IMR-90 (cell line): ENCODE measurements at regions of chr15 and their contacts with region 1.

Region 1: DNA sequence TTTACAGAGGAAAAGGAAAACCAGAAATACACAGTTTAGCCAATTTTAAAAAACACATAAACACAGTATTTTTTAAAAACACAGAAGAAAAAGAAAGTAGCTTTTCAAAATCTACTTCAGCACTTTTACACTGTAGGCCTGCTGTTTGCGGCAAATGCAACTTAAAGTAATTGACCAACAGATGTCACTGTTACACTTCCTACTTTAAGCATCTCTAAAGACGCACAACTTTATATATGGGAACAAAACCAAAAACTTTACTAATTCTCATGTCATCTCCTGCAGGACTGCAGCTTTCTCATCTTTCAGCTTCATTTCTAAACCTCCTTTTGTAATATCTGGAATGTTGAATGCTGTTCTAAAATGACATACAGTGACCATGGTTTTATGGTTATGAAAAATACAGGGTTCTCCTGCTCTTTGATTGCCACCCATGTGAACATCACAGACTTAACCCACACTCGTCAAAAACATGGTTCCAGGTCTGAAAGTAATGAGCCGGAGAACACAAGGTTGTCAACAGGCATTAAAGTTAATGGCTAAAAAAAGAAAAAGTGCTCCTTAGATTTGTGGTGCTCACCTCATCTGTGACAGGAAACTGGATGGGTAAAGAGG is 107.9 kb downstream of the FMN1 start:
- DNase-seq: peak; percentile 87
- ATAC-seq: peak; percentile 60
- H3K4me3 ChIP-seq: no peak overlapping the region
- H3K27ac ChIP-seq: peak overlapping the region; percentile 41; the same call in 1 of the 2 replicates
- H3K4me1 ChIP-seq: peaks cover 16% of the 10 kb centered on the region
- H3K27me3 ChIP-seq: no peaks in the 10 kb centered on the region
- CTCF ChIP-seq: peak; percentile 83
- POLR2A ChIP-seq: no peak
- RAD21 ChIP-seq: peak; percentile 90

Region 2: DNA sequence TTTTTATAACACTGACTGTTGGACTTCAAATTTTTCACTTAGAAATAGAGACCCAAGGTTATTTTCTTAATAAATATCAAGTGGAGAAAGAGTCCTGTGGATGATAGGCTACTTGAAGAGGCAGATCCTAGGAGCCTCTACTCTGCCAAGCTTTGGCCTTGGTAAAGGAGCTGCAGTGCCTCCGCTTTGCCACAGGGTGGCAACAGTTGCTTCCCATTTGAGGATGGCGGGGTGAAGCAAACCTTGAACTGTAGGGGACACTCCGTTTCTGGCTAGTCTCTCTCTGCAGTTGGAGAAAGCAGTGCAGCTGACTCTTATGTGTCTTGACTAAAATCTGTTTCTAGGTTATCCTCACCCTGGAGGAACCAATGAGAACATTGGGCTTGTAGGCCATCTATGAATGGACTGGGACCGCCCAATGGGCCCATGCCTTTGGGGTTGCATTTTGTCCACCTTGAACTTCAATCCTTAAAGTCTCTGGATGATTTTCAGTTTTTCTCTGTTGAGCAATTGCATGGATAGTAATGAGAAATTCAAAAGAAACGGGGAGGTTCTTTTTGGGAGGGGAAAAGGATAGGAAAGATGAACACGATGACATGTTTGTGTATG is 435.3 kb before region 1 on chr15:
- CTCF ChIA-PET with region 1: no interaction called
- POLR2A ChIA-PET with region 1: no interaction called
- dilution Hi-C with region 1: no loop called
- in situ Hi-C with region 1: no loop called
- intact Hi-C with region 1: loop called (anchors 5 kb)
- DNase-seq: peak; percentile 73
- ATAC-seq: peak; percentile 97
- H3K4me3 ChIP-seq: no peak overlapping the region
- H3K27ac ChIP-seq: no peak overlapping the region
- H3K4me1 ChIP-seq: peaks cover 4% of the 10 kb centered on the region; the same call in 1 of the 2 replicates
- H3K27me3 ChIP-seq: no peaks in the 10 kb centered on the region
- CTCF ChIP-seq: peak; percentile 92
- POLR2A ChIP-seq: no peak
- RAD21 ChIP-seq: peak; percentile 91

Region 3: DNA sequence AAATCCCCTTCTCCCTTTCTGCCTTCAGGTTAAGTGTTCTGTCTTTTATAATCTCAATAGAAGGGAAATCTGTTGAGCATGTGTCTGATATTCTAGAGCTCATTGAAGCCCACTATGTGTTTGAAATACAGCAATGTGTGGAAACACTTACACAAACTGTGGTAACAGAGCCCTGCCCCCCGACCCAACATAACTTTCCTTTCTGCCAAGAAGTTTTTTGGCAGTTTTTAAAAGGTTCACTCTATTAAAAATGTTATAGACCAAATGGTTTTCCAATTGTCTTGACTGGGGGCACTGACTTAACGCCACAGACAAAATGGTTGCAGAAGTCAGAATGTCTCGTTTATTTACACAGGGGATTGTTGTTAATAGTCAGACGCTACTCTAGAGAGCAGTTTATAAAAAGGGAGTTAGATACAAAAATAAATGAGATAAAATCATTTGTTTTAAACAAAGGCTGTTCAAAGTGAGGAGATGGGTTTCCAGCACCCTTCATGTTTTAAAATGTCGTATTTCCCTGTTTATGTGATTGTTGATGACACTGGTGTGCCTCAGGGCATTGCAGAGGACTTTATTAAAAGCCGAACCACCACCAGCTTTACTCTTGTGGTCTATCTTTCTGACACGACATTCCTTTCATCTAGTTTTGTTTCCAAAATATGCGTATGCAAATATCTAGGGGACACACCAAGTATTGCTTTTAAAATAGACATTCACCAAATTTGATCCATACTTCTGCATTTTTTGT is 395.5 kb before region 1 on chr15:
- CTCF ChIA-PET with region 1: no interaction called
- POLR2A ChIA-PET with region 1: no interaction called
- dilution Hi-C with region 1: no loop called
- in situ Hi-C with region 1: no loop called
- intact Hi-C with region 1: no loop called
- DNase-seq: no peak
- ATAC-seq: peak; percentile 44
- H3K4me3 ChIP-seq: no peak overlapping the region
- H3K27ac ChIP-seq: no peak overlapping the region
- H3K4me1 ChIP-seq: peaks cover 9% of the 10 kb centered on the region; the same call in 1 of the 2 replicates
- H3K27me3 ChIP-seq: no peaks in the 10 kb centered on the region; the same call in 1 of the 2 replicates
- CTCF ChIP-seq: no peak
- POLR2A ChIP-seq: no peak
- RAD21 ChIP-seq: no peak

Region 4: DNA sequence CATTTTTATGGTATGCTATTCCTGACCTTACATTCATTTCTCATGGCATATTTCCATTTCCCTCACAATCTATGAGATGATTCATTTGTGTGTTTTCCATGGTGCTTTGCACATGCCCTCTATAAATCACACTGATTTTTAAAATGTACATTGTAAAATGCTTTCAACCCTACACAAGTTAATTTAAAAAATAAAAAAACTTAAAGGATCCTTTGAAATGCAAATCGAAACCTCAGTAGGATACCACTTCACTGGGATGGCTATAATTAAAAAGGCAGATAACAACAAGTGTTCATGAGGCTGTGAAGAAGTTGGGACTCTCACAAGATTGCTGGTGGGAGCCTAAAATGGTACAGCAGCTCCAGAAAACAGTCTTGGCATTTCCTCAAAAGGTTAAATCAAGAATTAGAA is 24.4 kb after region 1 on chr15:
- CTCF ChIA-PET with region 1: interaction called, 4 read pairs
- POLR2A ChIA-PET with region 1: interaction called, 7 read pairs
- dilution Hi-C with region 1: no loop called
- in situ Hi-C with region 1: no loop called
- intact Hi-C with region 1: loop called (anchors 2 kb)
- DNase-seq: peak; percentile 75
- ATAC-seq: peak; percentile 15; the same call in 1 of the 2 replicates
- H3K4me3 ChIP-seq: no peak overlapping the region
- H3K27ac ChIP-seq: peak overlapping the region; percentile 94
- H3K4me1 ChIP-seq: peaks cover 22% of the 10 kb centered on the region
- H3K27me3 ChIP-seq: no peaks in the 10 kb centered on the region
- CTCF ChIP-seq: no peak
- POLR2A ChIP-seq: no peak
- RAD21 ChIP-seq: no peak

Region 5: GRCh38 chr15:33132722-33133345 is 46.2 kb after region 1 on chr15:
- CTCF ChIA-PET with region 1: interaction called, 35 read pairs
- POLR2A ChIA-PET with region 1: no interaction called
- dilution Hi-C with region 1: no loop called
- in situ Hi-C with region 1: loop called (anchors 5 kb)
- intact Hi-C with region 1: loop called (anchors 1 kb)
- DNase-seq: peak; percentile 76
- ATAC-seq: peak; percentile 94
- H3K4me3 ChIP-seq: no peak overlapping the region
- H3K27ac ChIP-seq: no peak overlapping the region
- H3K4me1 ChIP-seq: peaks cover 11% of the 10 kb centered on the region
- H3K27me3 ChIP-seq: no peaks in the 10 kb centered on the region
- CTCF ChIP-seq: peak; percentile 89
- POLR2A ChIP-seq: no peak
- RAD21 ChIP-seq: peak; percentile 95

Region 6: DNA sequence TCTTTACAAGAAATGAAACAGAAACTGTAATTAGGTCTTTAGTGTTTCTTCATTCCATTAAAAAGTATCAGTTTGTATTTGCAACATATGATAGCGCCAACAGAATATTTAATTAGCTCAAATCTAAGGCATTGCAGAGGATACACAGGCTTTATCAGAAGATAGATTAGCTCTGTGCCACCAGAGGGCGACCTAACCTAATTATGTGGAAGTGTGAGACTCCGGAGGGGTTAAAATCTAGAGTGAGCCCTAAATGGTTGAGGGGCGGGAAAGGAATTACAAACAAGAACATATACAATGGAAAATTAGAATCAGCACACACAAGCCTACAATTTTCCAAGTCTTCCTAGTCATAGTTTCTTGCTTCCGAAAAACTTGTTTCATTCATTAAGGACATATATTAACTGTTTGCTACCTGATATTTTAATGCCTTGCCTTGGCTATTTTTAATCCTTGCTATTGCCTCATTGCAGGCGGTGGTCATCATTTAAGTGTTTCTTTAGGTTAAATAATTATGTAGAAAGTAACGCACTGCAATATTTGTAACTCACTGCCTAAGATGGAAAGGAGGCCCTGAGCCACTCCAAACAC is 206.2 kb after region 1 on chr15:
- CTCF ChIA-PET with region 1: no interaction called
- POLR2A ChIA-PET with region 1: no interaction called
- dilution Hi-C with region 1: no loop called
- in situ Hi-C with region 1: no loop called
- intact Hi-C with region 1: loop called (anchors 5 kb)
- DNase-seq: peak; percentile 53
- ATAC-seq: peak; percentile 82
- H3K4me3 ChIP-seq: no peak overlapping the region
- H3K27ac ChIP-seq: no peak overlapping the region
- H3K4me1 ChIP-seq: no peaks in the 10 kb centered on the region
- H3K27me3 ChIP-seq: peaks cover 20% of the 10 kb centered on the region
- CTCF ChIP-seq: peak; percentile 62
- POLR2A ChIP-seq: no peak
- RAD21 ChIP-seq: peak; percentile 66